ENCODE measurements at regions of chr11 and their contacts with region 1.

Region 1: DNA sequence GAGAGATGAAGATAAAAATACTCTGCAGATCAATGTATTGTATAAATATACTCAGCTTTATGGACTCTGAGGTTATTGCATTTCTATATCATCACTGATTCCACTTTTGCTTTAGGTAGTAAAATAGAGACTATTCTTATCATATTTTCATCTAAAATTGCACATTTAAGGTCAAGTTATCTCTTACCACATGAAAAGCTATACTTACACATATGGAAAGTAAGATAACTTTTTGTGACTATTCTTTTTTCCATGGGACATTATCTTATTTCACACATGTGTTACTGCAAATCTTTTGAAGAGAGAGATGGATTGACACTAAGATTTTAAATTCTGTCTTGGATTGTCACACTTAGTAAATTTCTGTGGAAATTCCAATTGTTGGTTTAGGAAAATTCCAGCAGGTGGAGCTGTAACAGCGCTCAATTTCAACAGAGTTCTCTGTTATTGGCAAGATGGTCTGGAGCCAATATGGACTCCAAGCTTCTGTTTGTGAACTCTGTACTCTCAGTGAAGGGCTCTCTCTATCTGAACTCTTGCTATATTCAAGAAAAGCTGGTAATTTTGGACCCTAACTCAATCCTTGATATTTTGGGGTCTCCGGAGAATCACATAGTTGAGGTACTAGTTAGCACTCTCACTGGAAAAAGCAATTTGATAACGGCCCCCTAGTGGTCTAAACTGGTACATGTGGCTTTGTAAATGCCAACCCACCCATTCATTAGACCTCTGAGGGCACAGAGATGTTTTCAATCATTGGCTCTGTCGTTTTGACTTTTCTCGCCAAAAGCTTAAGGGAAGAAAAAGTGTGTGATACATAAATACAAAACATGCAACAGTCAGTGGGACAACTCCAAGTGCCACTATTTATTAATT is 429.7 kb downstream of the ETS1 start:
- DNase-seq: peak; percentile 53
- H3K4me3 Mint-ChIP-seq: peak overlapping the region; percentile 59
- H3K27ac Mint-ChIP-seq: peak overlapping the region; percentile 59
- H3K4me1 Mint-ChIP-seq: peaks cover 10% of the 10 kb centered on the region
- H3K27me3 Mint-ChIP-seq: no peaks in the 10 kb centered on the region

Region 2: GRCh38 chr11:128026596-128026995 is 131.1 kb before region 1 on chr11:
- CTCF ChIA-PET with region 1: interaction called, 70 read pairs
- POLR2A ChIA-PET with region 1: no interaction called
- intact Hi-C with region 1: loop called (anchors 1 kb)
- DNase-seq: no peak
- H3K4me3 Mint-ChIP-seq: no peak overlapping the region
- H3K27ac Mint-ChIP-seq: no peak overlapping the region
- H3K4me1 Mint-ChIP-seq: peaks cover 9% of the 10 kb centered on the region
- H3K27me3 Mint-ChIP-seq: peaks cover 3% of the 10 kb centered on the region

Region 3: GRCh38 chr11:128135451-128135850 is 22.2 kb before region 1 on chr11:
- CTCF ChIA-PET with region 1: interaction called, 12 read pairs
- POLR2A ChIA-PET with region 1: no interaction called
- intact Hi-C with region 1: no loop called
- DNase-seq: no peak
- H3K4me3 Mint-ChIP-seq: no peak overlapping the region
- H3K27ac Mint-ChIP-seq: no peak overlapping the region
- H3K4me1 Mint-ChIP-seq: peaks cover 12% of the 10 kb centered on the region
- H3K27me3 Mint-ChIP-seq: no peaks in the 10 kb centered on the region

Region 4: GRCh38 chr11:128757235-128757711 is 599.6 kb after region 1 on chr11:
- CTCF ChIA-PET with region 1: interaction called, 5 read pairs
- POLR2A ChIA-PET with region 1: no interaction called
- intact Hi-C with region 1: loop called (anchors 5 kb)
- DNase-seq: peak; percentile 84
- H3K4me3 Mint-ChIP-seq: peak overlapping the region; percentile 42
- H3K27ac Mint-ChIP-seq: peak overlapping the region; percentile 89
- H3K4me1 Mint-ChIP-seq: peaks cover 81% of the 10 kb centered on the region
- H3K27me3 Mint-ChIP-seq: no peaks in the 10 kb centered on the region

Region 5: GRCh38 chr11:128831174-128832120 is 673.8 kb after region 1 on chr11:
- CTCF ChIA-PET with region 1: interaction called, 67 read pairs
- POLR2A ChIA-PET with region 1: no interaction called
- intact Hi-C with region 1: loop called (anchors 1 kb)
- DNase-seq: peak; percentile 93
- H3K4me3 Mint-ChIP-seq: peak overlapping the region; percentile 30
- H3K27ac Mint-ChIP-seq: peak overlapping the region; percentile 89
- H3K4me1 Mint-ChIP-seq: peaks cover 19% of the 10 kb centered on the region
- H3K27me3 Mint-ChIP-seq: no peaks in the 10 kb centered on the region

Region 6: DNA sequence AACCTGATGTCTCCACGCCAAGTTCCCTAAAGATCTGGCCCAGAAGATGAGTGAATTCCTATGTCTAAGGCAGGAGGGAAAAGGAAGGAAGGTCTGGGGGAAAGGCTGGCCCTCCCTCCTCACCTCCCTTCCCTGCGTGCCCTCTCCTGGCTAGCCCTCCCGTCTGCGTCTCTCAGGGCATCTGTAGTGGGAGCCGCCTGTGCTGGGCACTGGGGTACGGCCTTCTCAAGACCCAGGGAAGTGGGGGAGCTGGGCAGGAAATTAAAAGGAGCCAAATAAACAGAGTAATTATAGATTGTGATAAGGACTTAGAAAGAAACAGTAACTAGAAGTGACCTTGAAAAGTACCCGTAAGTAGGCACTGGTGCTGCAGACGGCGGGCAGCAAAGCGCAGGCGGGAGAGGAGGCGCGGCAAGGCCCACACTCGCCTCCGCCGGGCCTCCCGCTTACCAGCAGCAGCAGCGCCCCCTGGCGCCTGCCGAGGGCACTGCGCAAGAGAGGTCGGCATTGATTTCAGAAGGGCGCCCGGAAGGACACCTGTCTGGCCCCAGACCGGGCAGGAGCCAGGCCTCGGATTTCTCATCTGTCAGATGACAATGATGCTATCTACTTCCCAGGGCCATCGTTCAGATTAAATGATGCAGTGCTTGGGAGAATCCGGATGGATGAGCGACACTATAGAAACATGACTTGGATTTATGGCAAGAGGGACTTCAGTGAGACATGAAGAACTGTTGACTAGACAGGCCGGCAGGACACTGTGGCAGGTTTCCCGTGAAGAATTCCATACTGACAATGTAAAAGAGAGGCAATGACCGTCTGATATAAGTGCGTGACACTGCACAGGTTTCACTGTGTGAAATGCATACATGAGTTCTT is 702.1 kb after region 1 on chr11:
- CTCF ChIA-PET with region 1: interaction called, 27 read pairs
- POLR2A ChIA-PET with region 1: no interaction called
- intact Hi-C with region 1: no loop called
- DNase-seq: peak; percentile 87
- H3K4me3 Mint-ChIP-seq: no peak overlapping the region
- H3K27ac Mint-ChIP-seq: no peak overlapping the region
- H3K4me1 Mint-ChIP-seq: peaks cover 4% of the 10 kb centered on the region
- H3K27me3 Mint-ChIP-seq: peaks cover 2% of the 10 kb centered on the region

Measured in activated CD4-positive, alpha-beta memory T cell treated with anti-CD3 and anti-CD28 coated beads for 36 hours (primary cell).